ENCODE measurements at regions of chr1 and their contacts with region 1.

Region 1: GRCh38 chr1:169546087-169546995 is 39.9 kb downstream of the F5 start:
- DNase-seq: peak; percentile 35
- ATAC-seq: peak; percentile 86
- H3K4me3 Mint-ChIP-seq: no peak overlapping the region
- H3K27ac Mint-ChIP-seq: peak overlapping the region; percentile 42; the same call in 1 of the 2 replicates
- H3K4me1 Mint-ChIP-seq: no peaks in the 10 kb centered on the region
- H3K27me3 Mint-ChIP-seq: no peaks in the 10 kb centered on the region; the same call in 1 of the 2 replicates
- CTCF ChIP-seq: peak; percentile 28; the same call in 1 of the 2 replicates

Region 2: GRCh38 chr1:169466259-169467230 is 79.8 kb before region 1 on chr1:
- CTCF ChIA-PET with region 1: interaction called, 20 read pairs
- POLR2A ChIA-PET with region 1: no interaction called
- DNase-seq: no peak
- ATAC-seq: peak; percentile 59; the same call in 1 of the 2 replicates
- H3K4me3 Mint-ChIP-seq: no peak overlapping the region
- H3K27ac Mint-ChIP-seq: no peak overlapping the region
- H3K4me1 Mint-ChIP-seq: no peaks in the 10 kb centered on the region
- H3K27me3 Mint-ChIP-seq: no peaks in the 10 kb centered on the region
- CTCF ChIP-seq: no peak

Region 3: GRCh38 chr1:169485544-169486278 is 60.6 kb before region 1 on chr1 and contains the start of gene SLC19A2:
- CTCF ChIA-PET with region 1: interaction called, 13 read pairs
- POLR2A ChIA-PET with region 1: no interaction called
- DNase-seq: peak; percentile 96
- ATAC-seq: peak; percentile 98
- H3K4me3 Mint-ChIP-seq: peak within 1 kb of the TSS; percentile 95
- H3K27ac Mint-ChIP-seq: peak within 1 kb of the TSS; percentile 99
- H3K4me1 Mint-ChIP-seq: peaks cover 62% of the 10 kb centered on the region
- H3K27me3 Mint-ChIP-seq: no peaks in the 10 kb centered on the region; the same call in 1 of the 2 replicates
- CTCF ChIP-seq: no peak
- total RNA-seq, gene SLC19A2: 14.6 to 15.8 TPM (median 14.7 TPM) in 3 replicates

Region 4: GRCh38 chr1:169565335-169566271 is 19.3 kb after region 1 on chr1:
- CTCF ChIA-PET with region 1: no interaction called
- POLR2A ChIA-PET with region 1: no interaction called
- DNase-seq: no peak
- ATAC-seq: no peak
- H3K4me3 Mint-ChIP-seq: no peak overlapping the region
- H3K27ac Mint-ChIP-seq: no peak overlapping the region
- H3K4me1 Mint-ChIP-seq: no peaks in the 10 kb centered on the region
- H3K27me3 Mint-ChIP-seq: no peaks in the 10 kb centered on the region
- CTCF ChIP-seq: no peak

Measured in WTC11 (cell line).